ENCODE measurements at regions of chr14 and their contacts with region 1.

Region 1: GRCh38 chr14:76876076-76876475 is 49.9 kb downstream of the LRRC74A start:
- DNase-seq: no peak
- ATAC-seq: peak; percentile 54
- H3K4me3 Mint-ChIP-seq: no peak overlapping the region
- H3K27ac Mint-ChIP-seq: no peak overlapping the region
- H3K4me1 Mint-ChIP-seq: no peaks in the 10 kb centered on the region
- H3K27me3 Mint-ChIP-seq: no peaks in the 10 kb centered on the region
- CTCF ChIP-seq: no peak

Region 2: DNA sequence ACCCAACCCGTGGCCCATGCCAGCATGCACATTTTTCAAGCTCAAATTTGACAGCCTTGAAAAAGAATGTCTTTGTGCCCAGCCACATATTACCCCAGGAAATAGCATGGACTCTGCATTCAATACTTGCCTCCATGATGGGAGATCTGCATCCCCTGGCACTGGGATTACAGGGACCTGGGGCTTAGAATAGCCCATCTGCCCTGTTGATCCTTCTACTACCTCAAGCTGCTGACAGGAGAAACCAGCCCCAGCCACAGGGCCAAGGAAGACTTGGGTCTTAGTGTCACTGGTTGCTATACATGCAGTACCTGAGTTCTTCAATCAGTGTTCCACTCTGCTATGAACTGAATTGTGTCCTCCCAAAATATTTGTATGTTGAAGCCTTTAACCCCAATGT is 35.4 kb after region 1 on chr14:
- CTCF ChIA-PET with region 1: interaction called, 36 read pairs
- POLR2A ChIA-PET with region 1: interaction called, 4 read pairs
- intact Hi-C with region 1: loop called (anchors 1 kb)
- DNase-seq: no peak
- ATAC-seq: no peak
- H3K4me3 Mint-ChIP-seq: no peak overlapping the region
- H3K27ac Mint-ChIP-seq: no peak overlapping the region
- H3K4me1 Mint-ChIP-seq: peaks cover 20% of the 10 kb centered on the region
- H3K27me3 Mint-ChIP-seq: no peaks in the 10 kb centered on the region
- CTCF ChIP-seq: no peak

Region 3: DNA sequence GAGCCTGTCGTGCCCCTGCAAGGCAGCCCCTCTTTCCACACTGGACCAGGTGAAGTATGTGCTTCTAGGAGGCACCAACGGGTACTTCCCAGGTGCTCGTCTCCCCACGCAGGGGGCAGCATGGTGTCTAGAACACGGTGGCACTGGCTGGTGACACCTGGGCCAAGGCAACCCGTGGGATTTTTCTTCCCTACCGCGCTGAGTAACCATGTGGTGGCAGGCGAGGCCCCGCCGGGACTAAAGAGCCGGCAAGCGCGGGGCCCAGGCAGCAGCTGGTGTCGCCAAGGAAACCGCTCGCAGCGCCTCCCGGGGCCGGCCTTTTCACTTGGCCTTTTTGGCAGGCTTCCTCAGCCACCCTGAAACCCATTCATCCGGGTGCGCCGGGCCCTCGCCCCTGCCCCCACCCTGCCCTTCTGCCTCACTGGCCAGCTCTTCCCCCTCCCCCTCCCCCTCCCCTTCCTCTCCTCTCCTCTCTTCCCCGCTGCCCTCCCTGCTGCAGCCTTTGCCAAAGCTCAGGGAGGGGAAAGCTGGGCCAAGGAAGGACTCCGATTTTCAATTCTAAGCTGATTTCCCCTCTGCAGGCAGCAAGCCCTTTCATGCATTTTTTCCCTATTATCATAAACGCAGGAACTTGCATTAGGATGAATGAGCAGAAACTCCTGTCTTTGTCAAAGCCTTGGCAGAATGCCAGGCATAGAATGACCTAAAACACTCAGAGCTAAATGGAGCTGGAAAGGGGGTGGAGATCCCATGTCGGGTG is 71.2 kb after region 1 on chr14:
- CTCF ChIA-PET with region 1: interaction called, 8 read pairs
- POLR2A ChIA-PET with region 1: no interaction called
- intact Hi-C with region 1: loop called (anchors 1 kb)
- DNase-seq: peak; percentile 69
- ATAC-seq: peak; percentile 93
- H3K4me3 Mint-ChIP-seq: peak overlapping the region; percentile 19
- H3K27ac Mint-ChIP-seq: no peak overlapping the region
- H3K4me1 Mint-ChIP-seq: peaks cover 19% of the 10 kb centered on the region
- H3K27me3 Mint-ChIP-seq: no peaks in the 10 kb centered on the region
- CTCF ChIP-seq: no peak

Region 4: GRCh38 chr14:77059276-77059915 is 183.3 kb after region 1 on chr14:
- CTCF ChIA-PET with region 1: interaction called, 73 read pairs
- POLR2A ChIA-PET with region 1: no interaction called
- intact Hi-C with region 1: no loop called
- DNase-seq: no peak
- ATAC-seq: no peak
- H3K4me3 Mint-ChIP-seq: no peak overlapping the region
- H3K27ac Mint-ChIP-seq: no peak overlapping the region
- H3K4me1 Mint-ChIP-seq: peaks cover 4% of the 10 kb centered on the region
- H3K27me3 Mint-ChIP-seq: no peaks in the 10 kb centered on the region
- CTCF ChIP-seq: no peak

Region 5: DNA sequence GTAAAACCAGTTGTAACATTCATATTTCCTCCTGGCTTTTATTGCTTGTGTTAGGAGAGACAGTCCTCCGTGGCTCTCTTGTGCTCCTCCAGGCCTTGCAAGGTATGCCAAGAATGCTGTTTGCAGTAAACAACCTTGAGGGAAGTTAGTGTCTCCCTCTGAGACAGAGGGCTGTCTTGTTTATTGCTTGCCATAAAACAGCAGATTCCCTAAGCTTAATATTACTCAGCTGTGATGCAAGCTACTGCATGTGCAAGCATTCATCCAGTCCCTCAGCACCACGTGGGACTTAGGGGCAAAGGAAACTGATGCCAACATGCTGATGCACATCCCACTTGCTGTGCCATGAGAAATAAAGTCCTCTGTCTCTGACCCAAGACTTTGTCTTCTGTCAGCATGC is 438.0 kb after region 1 on chr14:
- CTCF ChIA-PET with region 1: interaction called, 13 read pairs
- POLR2A ChIA-PET with region 1: no interaction called
- intact Hi-C with region 1: no loop called
- DNase-seq: no peak
- ATAC-seq: no peak
- H3K4me3 Mint-ChIP-seq: no peak overlapping the region
- H3K27ac Mint-ChIP-seq: no peak overlapping the region
- H3K4me1 Mint-ChIP-seq: peaks cover 4% of the 10 kb centered on the region
- H3K27me3 Mint-ChIP-seq: no peaks in the 10 kb centered on the region
- CTCF ChIP-seq: no peak

Measured in activated B cell treated with CpG ODN at 0.5 μM for 24 hours (primary cell).